ENCODE measurements at regions of chr12 and their contacts with region 1.

Region 1: DNA sequence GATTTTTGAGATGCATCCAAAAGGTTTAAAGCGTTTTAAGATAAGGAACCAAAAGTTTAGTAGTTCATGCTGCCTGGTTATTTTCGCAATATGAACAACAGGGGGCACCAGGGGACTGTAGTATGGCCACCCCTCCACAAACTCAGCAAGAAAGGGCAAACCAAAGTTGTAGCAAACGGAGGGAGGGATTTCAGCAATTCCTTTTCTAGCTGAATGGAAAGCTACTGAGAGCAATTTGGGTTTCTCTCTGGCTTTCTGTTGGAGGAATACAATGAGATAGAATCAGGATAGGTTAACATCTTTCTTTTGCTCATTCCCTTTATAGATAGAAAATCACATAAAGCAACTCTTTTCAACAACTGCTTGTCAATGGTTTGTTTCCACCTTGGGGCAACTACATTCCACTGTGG is 62.5 kb downstream of the DRAM1 start:
- DNase-seq: peak; percentile 73
- H3K4me3 Mint-ChIP-seq: no peak overlapping the region
- H3K27ac Mint-ChIP-seq: no peak overlapping the region
- H3K4me1 Mint-ChIP-seq: peaks cover 9% of the 10 kb centered on the region
- H3K27me3 Mint-ChIP-seq: peaks cover 18% of the 10 kb centered on the region

Region 2: GRCh38 chr12:101298426-101298825 is 641.4 kb before region 1 on chr12:
- CTCF ChIA-PET with region 1: no interaction called
- intact Hi-C with region 1: no loop called
- DNase-seq: no peak
- H3K4me3 Mint-ChIP-seq: no peak overlapping the region
- H3K27ac Mint-ChIP-seq: no peak overlapping the region
- H3K4me1 Mint-ChIP-seq: no peaks in the 10 kb centered on the region
- H3K27me3 Mint-ChIP-seq: no peaks in the 10 kb centered on the region

Region 3: DNA sequence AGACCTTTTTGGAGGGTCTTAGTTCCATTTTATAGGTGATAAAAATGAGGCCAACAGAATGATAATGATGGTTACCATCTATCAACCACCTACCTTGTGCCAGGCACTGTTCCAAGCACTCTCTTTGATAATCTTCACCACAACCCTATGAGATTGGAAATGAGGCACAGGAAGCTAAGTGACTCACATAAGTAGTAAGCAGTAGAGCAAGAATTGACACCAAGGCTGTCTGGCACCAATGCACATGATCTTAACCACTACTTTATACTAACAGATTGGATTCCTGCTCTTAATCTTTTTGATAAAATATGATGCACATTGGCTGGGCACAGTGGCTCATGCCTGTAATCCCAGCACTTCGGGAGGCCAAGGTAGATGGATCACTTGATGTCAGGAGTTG is 28.9 kb after region 1 on chr12:
- CTCF ChIA-PET with region 1: interaction called, 3 read pairs
- intact Hi-C with region 1: loop called (anchors 1 kb)
- DNase-seq: peak; percentile 32
- H3K4me3 Mint-ChIP-seq: no peak overlapping the region
- H3K27ac Mint-ChIP-seq: no peak overlapping the region
- H3K4me1 Mint-ChIP-seq: peaks cover 16% of the 10 kb centered on the region
- H3K27me3 Mint-ChIP-seq: no peaks in the 10 kb centered on the region

Region 4: GRCh38 chr12:102197789-102198188 is 257.9 kb after region 1 on chr12 and contains the start of gene PMCH:
- CTCF ChIA-PET with region 1: no interaction called
- intact Hi-C with region 1: loop called (anchors 10 kb)
- DNase-seq: no peak
- H3K4me3 Mint-ChIP-seq: no peak within 1 kb of the TSS
- H3K27ac Mint-ChIP-seq: no peak within 1 kb of the TSS
- H3K4me1 Mint-ChIP-seq: peaks cover 8% of the 10 kb centered on the region
- H3K27me3 Mint-ChIP-seq: no peaks in the 10 kb centered on the region
- total RNA-seq, gene PMCH: not detected

Region 5: DNA sequence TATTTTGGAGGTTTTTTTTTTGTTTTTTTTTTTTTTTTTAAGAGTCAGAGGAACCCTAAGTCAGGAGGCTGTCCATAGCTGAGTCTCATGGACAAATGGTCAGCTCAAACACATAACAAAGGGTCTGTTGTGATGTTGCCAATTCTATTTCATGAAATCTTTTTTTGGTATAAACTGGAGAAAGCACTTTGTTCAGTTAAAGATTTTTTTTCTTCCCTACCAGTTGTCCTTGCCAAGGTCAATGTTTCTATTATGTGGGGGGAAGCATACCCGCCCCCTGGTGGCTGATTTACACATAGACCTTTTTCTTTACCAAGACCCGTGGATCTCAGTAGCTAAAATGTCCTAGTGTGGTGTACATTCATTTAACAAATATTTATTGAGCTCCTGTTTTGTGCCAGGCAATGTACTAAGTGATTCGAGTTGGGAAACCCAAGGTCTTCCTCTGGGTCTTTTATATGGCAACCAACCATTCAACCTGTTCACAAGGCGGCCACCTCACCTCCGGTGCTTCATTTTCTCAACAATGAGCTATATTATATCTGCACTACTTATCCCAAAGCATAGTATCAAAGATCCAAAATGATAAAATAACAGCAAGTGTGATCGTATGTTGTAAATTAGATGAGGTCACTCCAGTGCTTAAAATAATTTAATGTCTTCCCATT is 762.7 kb after region 1 on chr12:
- CTCF ChIA-PET with region 1: no interaction called
- intact Hi-C with region 1: loop called (anchors 1 kb)
- DNase-seq: peak; percentile 12
- H3K4me3 Mint-ChIP-seq: no peak overlapping the region
- H3K27ac Mint-ChIP-seq: no peak overlapping the region
- H3K4me1 Mint-ChIP-seq: no peaks in the 10 kb centered on the region
- H3K27me3 Mint-ChIP-seq: no peaks in the 10 kb centered on the region

Region 6: GRCh38 chr12:102811110-102811737 is 871.4 kb after region 1 on chr12:
- CTCF ChIA-PET with region 1: interaction called, 3 read pairs
- intact Hi-C with region 1: loop called (anchors 2 kb)
- DNase-seq: peak; percentile 35
- H3K4me3 Mint-ChIP-seq: no peak overlapping the region
- H3K27ac Mint-ChIP-seq: no peak overlapping the region
- H3K4me1 Mint-ChIP-seq: no peaks in the 10 kb centered on the region
- H3K27me3 Mint-ChIP-seq: peaks cover 12% of the 10 kb centered on the region